CD8-positive, alpha-beta T cell (primary cell): ENCODE measurements at regions of chr19 and their contacts with region 1.

Region 1: DNA sequence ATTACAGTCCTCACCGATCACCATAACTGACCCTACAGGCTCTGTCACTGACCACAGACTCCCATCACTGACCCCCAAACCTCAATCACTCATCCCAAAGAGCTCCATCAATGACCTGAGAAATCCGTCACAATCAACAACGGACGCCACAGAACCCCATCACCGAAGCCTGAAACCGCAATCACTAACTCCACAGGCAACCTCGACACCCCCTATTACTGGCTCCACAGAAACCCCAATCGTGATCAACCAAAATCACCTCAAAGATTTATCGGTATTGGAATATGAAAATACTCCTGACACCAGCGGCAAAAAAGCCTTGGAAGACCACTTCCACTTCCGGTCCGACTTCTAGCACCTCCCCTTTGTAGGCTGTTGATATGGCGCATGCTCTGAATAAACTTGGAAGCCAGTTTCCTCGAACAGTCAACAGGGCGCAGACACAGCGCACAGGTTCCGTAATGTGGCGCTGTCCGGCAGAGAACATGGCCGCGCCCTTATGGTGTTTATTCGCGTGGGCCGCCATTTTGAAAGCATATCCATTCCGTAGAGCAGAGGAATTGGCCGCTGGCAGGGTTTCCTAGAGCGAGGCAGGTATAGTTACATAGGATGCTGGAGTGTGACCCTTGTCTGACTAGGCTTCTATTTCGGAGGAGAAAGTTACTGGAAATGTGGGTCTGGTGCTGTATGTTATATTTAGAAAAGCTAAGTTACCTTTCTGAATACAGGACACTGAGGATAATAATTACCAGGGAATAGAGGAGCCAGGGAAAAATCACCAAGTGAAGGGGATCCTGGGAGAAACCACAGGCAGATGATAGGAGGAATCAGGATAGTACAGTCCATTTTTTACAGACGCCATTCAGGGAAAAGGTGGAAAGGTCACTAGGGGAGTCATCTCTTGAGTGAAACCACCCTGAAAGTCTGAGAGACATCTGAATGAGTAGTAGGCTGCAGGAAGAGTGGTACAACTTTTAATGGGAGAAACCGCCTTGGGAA is at the start of gene ZNF585A:
- DNase-seq: peak; percentile 83 to 98 (median 90)
- ATAC-seq: peak; percentile 99
- H3K4me3 ChIP-seq: peak within 1 kb of the TSS; percentile 85 to 91
- H3K4me3 Mint-ChIP-seq: no peak within 1 kb of the TSS
- H3K27ac ChIP-seq: peak within 1 kb of the TSS; percentile 74 to 89
- H3K27ac Mint-ChIP-seq: no peak within 1 kb of the TSS
- H3K4me1 ChIP-seq: no peaks in the 10 kb centered on the region
- H3K4me1 Mint-ChIP-seq: peaks cover 6% of the 10 kb centered on the region
- H3K27me3 ChIP-seq: no peaks in the 10 kb centered on the region
- H3K27me3 Mint-ChIP-seq: no peaks in the 10 kb centered on the region
- CTCF ChIP-seq: no peak
- total RNA-seq, gene ZNF585A: 5.3 TPM

Region 2: GRCh38 chr19:36528194-36528920 is 644.3 kb before region 1 on chr19 and contains the start of gene ZNF260:
- CTCF ChIA-PET with region 1: no interaction called
- POLR2A ChIA-PET with region 1: interaction called, 4 read pairs
- intact Hi-C with region 1: loop called in 1 of 2 experiments (anchors 5 kb)
- DNase-seq: peak; percentile 77 to 96 (median 92)
- ATAC-seq: peak; percentile 90
- H3K4me3 ChIP-seq: peak within 1 kb of the TSS; percentile 64 to 85
- H3K4me3 Mint-ChIP-seq: peak within 1 kb of the TSS; percentile 99
- H3K27ac ChIP-seq: peak within 1 kb of the TSS; percentile 52 to 84
- H3K27ac Mint-ChIP-seq: peak within 1 kb of the TSS; percentile 96
- H3K4me1 ChIP-seq: peaks cover 21% of the 10 kb centered on the region
- H3K4me1 Mint-ChIP-seq: peaks cover 28% of the 10 kb centered on the region
- H3K27me3 ChIP-seq: no peaks in the 10 kb centered on the region
- H3K27me3 Mint-ChIP-seq: no peaks in the 10 kb centered on the region
- CTCF ChIP-seq: no peak
- total RNA-seq, gene ZNF260: 2.8 to 4.6 TPM

Region 3: GRCh38 chr19:36833430-36833829 is 339.2 kb before region 1 on chr19:
- CTCF ChIA-PET with region 1: no interaction called
- POLR2A ChIA-PET with region 1: no interaction called
- intact Hi-C with region 1: no loop called
- DNase-seq: no peak
- ATAC-seq: no peak
- H3K4me3 ChIP-seq: no peak overlapping the region
- H3K4me3 Mint-ChIP-seq: no peak overlapping the region
- H3K27ac ChIP-seq: no peak overlapping the region
- H3K27ac Mint-ChIP-seq: no peak overlapping the region
- H3K4me1 ChIP-seq: peaks cover 13% of the 10 kb centered on the region
- H3K4me1 Mint-ChIP-seq: peaks cover 11% of the 10 kb centered on the region
- H3K27me3 ChIP-seq: no peaks in the 10 kb centered on the region
- H3K27me3 Mint-ChIP-seq: no peaks in the 10 kb centered on the region
- CTCF ChIP-seq: no peak

Region 4: DNA sequence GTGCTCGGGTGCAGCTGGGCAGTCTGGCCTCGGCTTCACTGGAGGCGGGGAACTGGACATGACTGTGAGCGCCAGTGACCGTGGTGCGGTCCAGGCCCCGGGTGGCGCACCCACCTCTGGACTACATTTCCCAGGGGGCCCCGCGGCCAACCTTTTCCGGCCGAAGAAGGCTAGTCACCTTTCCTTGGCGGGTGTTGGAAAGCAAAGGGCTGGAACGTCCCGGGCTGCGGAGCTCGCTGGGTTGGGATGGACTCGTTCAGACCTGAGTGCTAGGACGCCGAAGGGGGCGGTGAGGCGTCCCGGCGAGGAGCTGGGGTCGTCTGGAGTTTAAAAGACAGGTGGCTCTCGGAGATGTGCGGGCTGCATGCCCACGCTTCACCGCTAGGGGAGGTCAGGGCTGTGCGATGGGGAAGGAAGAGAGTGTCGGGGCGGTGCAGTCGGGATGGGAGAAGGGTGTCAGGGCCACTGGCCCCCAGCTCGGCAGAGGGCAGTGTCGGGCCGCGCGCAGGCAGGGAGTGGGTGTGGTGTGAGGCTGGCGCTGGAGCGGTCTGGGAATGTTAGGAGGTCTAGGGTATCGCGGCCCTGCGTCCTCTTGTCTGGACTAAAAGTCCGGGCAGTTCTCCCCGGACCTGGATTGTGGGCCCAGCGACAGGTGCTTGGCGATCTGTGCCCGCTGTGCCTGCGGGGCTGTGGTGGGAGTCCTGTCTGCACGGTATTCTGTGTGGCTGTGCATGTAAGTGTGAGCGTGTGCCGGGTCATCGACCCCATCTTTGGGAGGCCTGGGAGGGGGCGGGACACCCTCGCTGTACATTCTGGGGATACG is 199.4 kb before region 1 on chr19:
- CTCF ChIA-PET with region 1: no interaction called
- POLR2A ChIA-PET with region 1: no interaction called
- intact Hi-C with region 1: loop called in 1 of 2 experiments (anchors 1 kb)
- DNase-seq: peak; percentile 49 to 92 (median 77)
- ATAC-seq: peak; percentile 90
- H3K4me3 ChIP-seq: peak overlapping the region; percentile 59 to 100
- H3K4me3 Mint-ChIP-seq: peak overlapping the region; percentile 90
- H3K27ac ChIP-seq: peak overlapping the region; percentile 53 to 66
- H3K27ac Mint-ChIP-seq: peak overlapping the region; percentile 88
- H3K4me1 ChIP-seq: peaks cover 15% of the 10 kb centered on the region
- H3K4me1 Mint-ChIP-seq: peaks cover 24% of the 10 kb centered on the region
- H3K27me3 ChIP-seq: no peaks in the 10 kb centered on the region
- H3K27me3 Mint-ChIP-seq: no peaks in the 10 kb centered on the region
- CTCF ChIP-seq: no peak

Region 5: GRCh38 chr19:37309834-37310575 is 137.3 kb after region 1 on chr19:
- CTCF ChIA-PET with region 1: no interaction called
- POLR2A ChIA-PET with region 1: no interaction called
- intact Hi-C with region 1: loop called in 1 of 2 experiments (anchors 10 kb)
- DNase-seq: peak in 4 of 9 experiments; percentile 27 to 64 (median 45)
- ATAC-seq: no peak
- H3K4me3 ChIP-seq: no peak overlapping the region
- H3K4me3 Mint-ChIP-seq: no peak overlapping the region
- H3K27ac ChIP-seq: no peak overlapping the region
- H3K27ac Mint-ChIP-seq: no peak overlapping the region
- H3K4me1 ChIP-seq: no peaks in the 10 kb centered on the region
- H3K4me1 Mint-ChIP-seq: peaks cover 16% of the 10 kb centered on the region
- H3K27me3 ChIP-seq: no peaks in the 10 kb centered on the region
- H3K27me3 Mint-ChIP-seq: peaks cover 4% of the 10 kb centered on the region
- CTCF ChIP-seq: peak; percentile 53

Region 6: GRCh38 chr19:37334179-37335071 is 161.8 kb after region 1 on chr19:
- CTCF ChIA-PET with region 1: no interaction called
- POLR2A ChIA-PET with region 1: no interaction called
- intact Hi-C with region 1: no loop called
- DNase-seq: peak; percentile 75 to 96 (median 87)
- ATAC-seq: peak; percentile 97
- H3K4me3 ChIP-seq: peak overlapping the region; percentile 46 to 74
- H3K4me3 Mint-ChIP-seq: peak overlapping the region; percentile 96
- H3K27ac ChIP-seq: peak overlapping the region; percentile 46 to 87
- H3K27ac Mint-ChIP-seq: peak overlapping the region; percentile 95
- H3K4me1 ChIP-seq: peaks cover 10% of the 10 kb centered on the region
- H3K4me1 Mint-ChIP-seq: peaks cover 47% of the 10 kb centered on the region
- H3K27me3 ChIP-seq: no peaks in the 10 kb centered on the region
- H3K27me3 Mint-ChIP-seq: no peaks in the 10 kb centered on the region
- CTCF ChIP-seq: no peak